K562 (cell line): ENCODE measurements at regions of chr3 and their contacts with region 1.

Region 1: GRCh38 chr3:139427283-139427993 is 38.0 kb upstream of the COPB2 start:
- DNase-seq: peak; percentile 69 to 72 (median 70)
- ATAC-seq: peak; percentile 96
- H3K4me3 ChIP-seq: no peak overlapping the region
- H3K27ac ChIP-seq: no peak overlapping the region
- H3K4me1 ChIP-seq: no peaks in the 10 kb centered on the region
- H3K27me3 ChIP-seq: no peaks in the 10 kb centered on the region
- CTCF ChIP-seq: peak; percentile 61 to 88 (median 75); a peak in 5 of 6 replicates
- EP300 ChIP-seq: no peak
- POLR2A ChIP-seq: no peak
- RAD21 ChIP-seq: peak; percentile 86 to 90

Region 2: GRCh38 chr3:138946181-138947059 is 481.0 kb before region 1 on chr3:
- CTCF ChIA-PET with region 1: no interaction called
- POLR2A ChIA-PET with region 1: no interaction called
- in situ Hi-C with region 1: no loop called
- intact Hi-C with region 1: no loop called
- DNase-seq: peak; percentile 56 to 88 (median 68)
- ATAC-seq: peak; percentile 46
- H3K4me3 ChIP-seq: peak overlapping the region; percentile 62
- H3K27ac ChIP-seq: peak overlapping the region; percentile 87
- H3K4me1 ChIP-seq: peaks cover 20 to 50% of the 10 kb centered on the region in 2 experiments; a peak in 4 of 5 replicates
- H3K27me3 ChIP-seq: no peaks in the 10 kb centered on the region
- CTCF ChIP-seq: peak; percentile 65 to 68 (median 67)
- EP300 ChIP-seq: no peak
- POLR2A ChIP-seq: no peak
- RAD21 ChIP-seq: peak in 1 of 2 experiments; percentile 35; a peak in 1 of 4 replicates

Region 3: DNA sequence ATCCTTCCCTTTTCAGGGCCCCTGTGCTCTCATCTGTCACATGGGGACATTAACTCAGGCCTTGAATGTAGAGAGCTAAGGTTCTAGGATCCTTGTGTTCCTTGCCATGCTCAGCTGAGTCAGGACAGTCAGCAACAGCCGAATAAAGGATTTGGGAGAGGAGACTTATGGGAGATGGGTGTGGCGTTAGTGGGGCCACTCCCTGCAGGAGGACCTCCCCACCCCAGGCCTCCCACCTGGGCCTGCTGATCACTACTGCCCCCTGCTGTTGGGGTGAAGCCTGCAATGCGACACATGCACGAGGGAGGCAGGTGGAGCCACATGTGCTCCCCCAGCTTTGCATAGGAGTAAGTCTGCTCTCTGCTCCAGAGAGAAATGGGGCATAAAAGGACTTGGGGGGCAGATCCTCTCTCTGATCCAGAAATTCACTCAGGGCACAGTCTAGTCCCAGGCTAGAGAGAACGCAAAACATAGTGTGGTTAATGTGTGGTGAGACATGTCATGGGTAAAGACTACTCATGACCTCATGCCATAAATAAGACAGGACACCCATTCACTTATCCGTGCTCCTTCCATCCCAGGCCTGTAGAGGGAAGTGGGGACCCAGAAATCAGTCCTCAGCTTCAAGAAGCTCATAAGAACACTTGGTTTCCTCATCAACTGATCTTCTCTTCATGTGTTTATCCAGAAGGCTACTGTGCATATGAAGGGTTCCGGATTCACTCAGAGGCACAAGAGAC is 92.7 kb after region 1 on chr3:
- CTCF ChIA-PET with region 1: interaction called, 3 read pairs
- POLR2A ChIA-PET with region 1: no interaction called
- in situ Hi-C with region 1: no loop called
- intact Hi-C with region 1: loop called (anchors 1 kb)
- DNase-seq: peak; percentile 84 to 95 (median 92)
- ATAC-seq: peak; percentile 98
- H3K4me3 ChIP-seq: no peak overlapping the region
- H3K27ac ChIP-seq: no peak overlapping the region; the same call in 2 of the 3 replicates
- H3K4me1 ChIP-seq: peaks cover 3% of the 10 kb centered on the region in 2 experiments; a peak in 3 of 5 replicates
- H3K27me3 ChIP-seq: peaks cover 4 to 7% of the 10 kb centered on the region in 2 experiments; a peak in 4 of 5 replicates
- CTCF ChIP-seq: peak; percentile 85 to 95 (median 91)
- EP300 ChIP-seq: no peak
- POLR2A ChIP-seq: no peak
- RAD21 ChIP-seq: peak; percentile 56 to 75

Region 4: GRCh38 chr3:139561959-139562676 is 134.7 kb after region 1 on chr3:
- CTCF ChIA-PET with region 1: interaction called, 12 read pairs
- POLR2A ChIA-PET with region 1: no interaction called
- in situ Hi-C with region 1: no loop called
- intact Hi-C with region 1: loop called (anchors 1 kb)
- DNase-seq: peak; percentile 35 to 57 (median 42)
- ATAC-seq: peak; percentile 78
- H3K4me3 ChIP-seq: no peak overlapping the region
- H3K27ac ChIP-seq: no peak overlapping the region
- H3K4me1 ChIP-seq: no peaks in the 10 kb centered on the region
- H3K27me3 ChIP-seq: peaks cover 0 to 9% of the 10 kb centered on the region in 2 experiments; a peak in 3 of 5 replicates
- CTCF ChIP-seq: peak; percentile 54 to 69 (median 68)
- EP300 ChIP-seq: no peak
- POLR2A ChIP-seq: no peak
- RAD21 ChIP-seq: peak; percentile 62 to 73

Region 5: GRCh38 chr3:139935016-139935865 is 507.8 kb after region 1 on chr3 and contains the start of gene CLSTN2:
- CTCF ChIA-PET with region 1: no interaction called
- POLR2A ChIA-PET with region 1: no interaction called
- in situ Hi-C with region 1: no loop called
- intact Hi-C with region 1: loop called (anchors 5 kb)
- DNase-seq: peak in 2 of 4 experiments; percentile 4 to 18
- ATAC-seq: peak; percentile 55
- H3K4me3 ChIP-seq: no peak within 1 kb of the TSS
- H3K27ac ChIP-seq: no peak within 1 kb of the TSS
- H3K4me1 ChIP-seq: peaks cover 0 to 15% of the 10 kb centered on the region in 2 experiments; a peak in 2 of 5 replicates
- H3K27me3 ChIP-seq: peaks cover 3 to 24% of the 10 kb centered on the region in 2 experiments; a peak in 2 of 5 replicates
- CTCF ChIP-seq: no peak
- EP300 ChIP-seq: no peak
- POLR2A ChIP-seq: no peak
- RAD21 ChIP-seq: no peak
- polyA plus RNA-seq, gene CLSTN2: 0.04 TPM in 1 of 2 experiments, not detected in the other

Region 6: DNA sequence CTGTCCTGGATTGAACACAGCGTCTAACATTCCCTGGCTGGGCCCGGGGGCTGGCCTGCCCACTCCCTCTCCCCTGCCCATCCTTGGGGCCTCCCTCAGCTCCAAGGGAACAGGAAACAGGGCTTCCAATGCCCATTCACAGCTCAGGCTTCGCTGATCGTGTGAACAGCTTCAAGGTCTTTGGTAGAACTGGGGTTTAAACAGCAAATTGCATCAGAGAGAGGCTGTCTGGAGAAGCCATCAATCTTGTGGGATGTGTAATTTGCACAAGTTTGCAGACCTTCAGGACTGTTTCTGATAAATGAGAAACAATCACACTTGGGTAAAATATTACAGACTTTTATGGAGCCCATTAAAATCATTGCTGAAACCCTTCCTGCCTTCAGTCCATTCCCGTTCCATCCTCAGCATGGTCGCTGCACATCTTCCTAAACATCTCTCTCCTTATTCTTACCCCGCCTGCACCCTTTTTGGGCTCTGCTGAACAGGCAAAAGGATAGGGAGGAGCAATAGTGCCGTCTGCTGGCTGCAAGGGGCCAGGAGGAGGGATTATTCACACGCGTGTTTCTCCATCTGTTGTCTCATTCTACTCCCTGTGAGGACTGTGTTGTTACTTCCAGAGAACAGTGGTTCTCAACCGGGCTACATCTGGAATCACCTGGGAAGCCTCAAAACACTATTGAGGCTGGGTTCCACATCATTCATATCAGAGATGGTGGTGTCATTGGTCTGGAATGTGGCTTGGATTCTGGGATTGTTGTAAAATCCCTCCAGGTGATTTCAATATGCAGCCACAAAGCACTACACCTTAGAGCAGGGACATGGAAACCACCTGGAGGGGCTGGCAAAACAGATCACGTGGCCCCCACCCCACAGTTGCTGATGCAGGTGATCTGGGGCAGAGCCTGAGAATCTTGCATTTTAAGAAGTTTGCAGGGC is 623.9 kb after region 1 on chr3:
- CTCF ChIA-PET with region 1: no interaction called
- POLR2A ChIA-PET with region 1: no interaction called
- in situ Hi-C with region 1: no loop called
- intact Hi-C with region 1: loop called (anchors 10 kb)
- DNase-seq: peak; percentile 11 to 36 (median 20)
- ATAC-seq: peak; percentile 79
- H3K4me3 ChIP-seq: no peak overlapping the region
- H3K27ac ChIP-seq: no peak overlapping the region
- H3K4me1 ChIP-seq: no peaks in the 10 kb centered on the region
- H3K27me3 ChIP-seq: no peaks in the 10 kb centered on the region; a peak in 2 of 5 replicates
- CTCF ChIP-seq: peak; percentile 60 to 74 (median 62)
- EP300 ChIP-seq: no peak
- POLR2A ChIP-seq: no peak
- RAD21 ChIP-seq: peak; percentile 57 to 70